ENCODE measurements at regions of chr1 and their contacts with region 1.

Region 1: GRCh38 chr1:156123356-156124196 is 9.1 kb downstream of the LMNA start:
- DNase-seq: no peak
- H3K4me3 ChIP-seq: no peak overlapping the region
- H3K27ac ChIP-seq: no peak overlapping the region
- H3K4me1 ChIP-seq: peaks cover 25% of the 10 kb centered on the region
- CTCF ChIP-seq: peak; percentile 42; the same call in 1 of the 2 replicates

Region 2: GRCh38 chr1:156198831-156199349 is 75.3 kb after region 1 on chr1:
- CTCF ChIA-PET with region 1: no interaction called
- POLR2A ChIA-PET with region 1: interaction called, 10 read pairs
- intact Hi-C with region 1: no loop called
- DNase-seq: no peak
- H3K4me3 ChIP-seq: no peak overlapping the region
- H3K27ac ChIP-seq: no peak overlapping the region
- H3K4me1 ChIP-seq: peaks cover 17% of the 10 kb centered on the region
- CTCF ChIP-seq: no peak

Measured in OCI-LY7 (cell line).